Activated naive CD4-positive, alpha-beta T cell treated with anti-CD3 and anti-CD28 coated beads for 36 hours (primary cell): ENCODE measurements at regions of chr2 and their contacts with region 1.

Region 1: DNA sequence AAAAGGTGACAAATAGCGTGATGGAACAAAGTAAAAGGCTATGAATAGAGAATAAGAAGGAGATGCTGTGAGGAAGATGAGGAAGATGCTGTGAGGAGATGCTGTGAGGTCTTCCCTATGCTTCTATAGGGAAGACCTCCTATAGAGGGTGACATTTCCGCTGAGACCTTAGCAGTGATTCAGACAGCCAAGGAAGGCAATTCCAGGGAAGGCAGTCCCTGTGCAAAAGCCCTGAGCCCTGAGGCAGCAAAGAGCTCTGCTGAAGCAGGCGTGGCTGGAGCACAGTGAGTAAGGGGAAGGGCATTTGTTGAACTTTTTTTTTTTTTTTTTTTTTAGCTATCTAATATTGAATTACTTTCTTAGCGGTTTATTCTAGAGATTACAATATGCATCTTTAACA is 142.7 kb upstream of the FOSL2 start:
- DNase-seq: no peak
- H3K4me3 Mint-ChIP-seq: no peak overlapping the region
- H3K27ac Mint-ChIP-seq: no peak overlapping the region
- H3K4me1 Mint-ChIP-seq: peaks cover 28% of the 10 kb centered on the region
- H3K27me3 Mint-ChIP-seq: no peaks in the 10 kb centered on the region

Region 2: GRCh38 chr2:28234807-28235206 is 15.2 kb before region 1 on chr2:
- CTCF ChIA-PET with region 1: no interaction called
- intact Hi-C with region 1: no loop called
- DNase-seq: no peak
- H3K4me3 Mint-ChIP-seq: no peak overlapping the region
- H3K27ac Mint-ChIP-seq: no peak overlapping the region
- H3K4me1 Mint-ChIP-seq: no peaks in the 10 kb centered on the region
- H3K27me3 Mint-ChIP-seq: no peaks in the 10 kb centered on the region

Region 3: DNA sequence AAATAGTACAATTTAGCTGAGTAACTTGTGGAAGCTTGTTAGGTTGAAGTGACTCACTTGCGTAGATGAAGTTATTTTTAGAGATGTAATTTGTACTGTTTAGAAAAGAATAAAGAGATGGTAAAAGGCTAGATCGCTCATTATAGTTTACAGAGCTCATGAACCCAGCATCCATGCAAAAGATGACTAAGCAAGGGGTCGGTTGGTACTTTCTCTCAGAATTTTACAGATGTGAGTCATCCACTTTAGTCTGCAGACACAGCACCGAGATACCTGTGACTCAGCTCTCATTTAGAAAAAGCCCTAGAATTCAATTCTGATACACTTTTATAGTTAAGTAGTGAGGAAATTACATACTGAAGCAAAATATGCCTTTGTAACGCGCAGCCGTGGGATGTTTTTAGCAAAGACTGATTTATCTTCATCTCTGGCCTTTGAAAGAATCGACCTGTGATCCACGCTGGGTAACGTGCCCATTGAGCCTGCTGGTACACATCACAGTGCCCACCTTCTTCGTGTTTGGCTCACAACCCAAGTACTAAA is 26.1 kb after region 1 on chr2:
- CTCF ChIA-PET with region 1: no interaction called
- intact Hi-C with region 1: loop called (anchors 1 kb)
- DNase-seq: peak; percentile 56
- H3K4me3 Mint-ChIP-seq: no peak overlapping the region
- H3K27ac Mint-ChIP-seq: peak overlapping the region; percentile 38
- H3K4me1 Mint-ChIP-seq: peaks cover 35% of the 10 kb centered on the region
- H3K27me3 Mint-ChIP-seq: no peaks in the 10 kb centered on the region

Region 4: GRCh38 chr2:28406276-28407096 is 156.5 kb after region 1 on chr2:
- CTCF ChIA-PET with region 1: interaction called, 3 read pairs
- intact Hi-C with region 1: loop called (anchors 5 kb)
- DNase-seq: peak; percentile 50
- H3K4me3 Mint-ChIP-seq: no peak overlapping the region
- H3K27ac Mint-ChIP-seq: peak overlapping the region; percentile 32
- H3K4me1 Mint-ChIP-seq: peaks cover 74% of the 10 kb centered on the region
- H3K27me3 Mint-ChIP-seq: no peaks in the 10 kb centered on the region